Posterior cingulate gyrus (tissue), 11 donors: ENCODE measurements at regions of chr3 and their contacts with region 1.

Region 1: GRCh38 chr3:25664810-25665314 is at the start of gene TOP2B:
- DNase-seq: peak; percentile 96 to 100 (median 96)

Region 2: DNA sequence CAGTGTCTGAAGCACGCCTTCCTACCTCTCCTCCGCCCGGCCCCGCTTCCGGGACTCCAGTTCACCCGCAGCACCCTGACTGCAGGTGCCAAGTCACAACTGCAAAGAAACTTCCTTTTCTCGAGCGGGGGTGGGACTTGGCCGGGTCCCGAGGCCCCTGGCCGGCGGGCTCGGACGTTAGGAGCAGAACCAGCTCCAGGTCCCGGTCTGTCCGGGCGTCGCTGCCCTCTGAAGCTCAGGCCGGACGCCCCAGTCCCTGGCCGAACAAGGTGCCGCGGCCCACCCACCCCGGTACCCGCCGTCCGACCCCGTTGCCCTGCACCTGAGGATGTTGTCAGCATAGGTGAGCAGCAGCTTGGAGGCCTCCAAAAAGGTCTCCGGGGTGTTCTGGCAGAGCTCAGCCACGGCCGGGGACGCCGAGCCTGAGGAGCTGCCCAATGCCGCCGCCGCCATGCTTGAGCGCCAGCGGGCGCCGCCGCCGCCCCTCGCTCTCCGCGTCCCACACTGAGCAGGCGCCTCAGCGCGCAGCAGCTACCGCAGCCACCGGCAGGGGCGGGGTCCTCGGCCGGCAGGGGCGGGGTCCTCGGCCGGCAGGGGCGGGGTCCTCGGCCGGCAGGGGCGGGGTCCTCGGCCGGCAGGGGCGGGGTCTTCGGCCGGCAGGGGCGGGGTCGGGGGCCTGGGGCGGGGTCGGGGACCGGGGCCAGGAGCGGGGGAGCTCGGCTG is 118.2 kb after region 1 on chr3 and contains the start of gene NGLY1:
- intact Hi-C with region 1: loop called (anchors 5 kb)
- DNase-seq: peak; percentile 66 to 98 (median 86)

Region 3: DNA sequence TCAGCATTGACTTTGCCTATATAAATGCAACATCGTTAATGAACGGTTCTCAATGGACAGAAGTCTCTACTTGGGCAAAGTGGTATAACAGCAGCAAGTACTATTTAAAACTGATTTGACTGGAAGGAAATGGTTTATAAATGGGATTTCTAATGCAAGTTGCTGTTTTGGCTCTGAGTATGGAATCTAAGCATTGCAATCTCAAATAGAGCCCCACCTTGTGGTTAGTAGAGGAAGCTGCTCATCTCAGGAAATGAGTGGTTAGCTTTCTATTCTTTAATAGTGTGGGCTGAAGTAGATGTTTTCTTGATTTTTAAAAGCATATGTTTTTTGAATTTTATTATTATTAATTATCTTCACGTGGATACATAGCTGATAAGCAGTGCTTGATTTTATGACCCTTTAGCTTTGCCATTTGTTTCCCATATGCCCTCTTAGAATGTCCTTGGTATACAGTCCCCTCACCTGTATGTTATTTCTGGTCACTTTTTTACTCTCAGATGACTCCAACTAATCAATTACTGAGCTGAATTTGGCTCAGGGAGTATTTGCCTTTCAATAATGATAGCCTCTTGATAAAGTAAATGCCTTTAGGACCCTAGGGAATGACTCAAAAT is 192.1 kb after region 1 on chr3:
- intact Hi-C with region 1: loop called (anchors 5 kb)
- DNase-seq: no peak